Right ventricle myocardium superior (tissue), 1 donor: ENCODE measurements at regions of chr2 and their contacts with region 1.

Region 1: GRCh38 chr2:39657287-39657937 is 8.3 kb upstream of the TMEM178A start:
- DNase-seq: no peak
- ATAC-seq: peak; percentile 34

Region 2: GRCh38 chr2:39608686-39609441 is 48.5 kb before region 1 on chr2:
- intact Hi-C with region 1: loop called (anchors 10 kb)
- DNase-seq: no peak
- ATAC-seq: peak; percentile 82

Region 3: GRCh38 chr2:39851651-39852110 is 194.3 kb after region 1 on chr2:
- intact Hi-C with region 1: no loop called
- DNase-seq: no peak
- ATAC-seq: no peak

Region 4: GRCh38 chr2:40304340-40304739 is 646.9 kb after region 1 on chr2:
- intact Hi-C with region 1: no loop called
- DNase-seq: no peak
- ATAC-seq: peak; percentile 65